Caco-2 (cell line): ENCODE measurements at regions of chr13 and their contacts with region 1.

Region 1: DNA sequence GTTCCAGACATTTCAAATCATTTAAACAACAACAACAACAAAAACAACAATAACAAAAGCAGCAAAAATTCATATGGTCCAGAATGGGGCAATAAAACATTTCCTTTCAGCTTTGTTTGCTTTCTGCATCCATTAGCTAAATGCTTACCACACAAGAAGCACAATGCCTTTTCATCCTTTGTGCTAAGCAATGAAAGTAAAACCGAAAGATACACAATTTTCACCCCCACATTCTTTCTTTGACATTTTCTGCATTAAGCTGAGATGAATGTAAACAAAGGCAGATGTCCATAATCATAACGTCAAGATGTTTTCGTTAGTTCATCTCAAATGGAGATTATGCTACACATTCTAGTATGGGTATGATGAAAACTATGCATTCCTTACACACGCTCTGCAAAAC is 568.5 kb downstream of the SLITRK6 start:
- DNase-seq: peak in 1 of 2 experiments; percentile 13
- H3K4me3 ChIP-seq: no peak overlapping the region
- H3K4me3 Mint-ChIP-seq: no peak overlapping the region
- H3K27ac Mint-ChIP-seq: no peak overlapping the region
- H3K4me1 ChIP-seq: peaks cover 29% of the 10 kb centered on the region
- H3K4me1 Mint-ChIP-seq: peaks cover 7% of the 10 kb centered on the region
- H3K27me3 ChIP-seq: no peaks in the 10 kb centered on the region
- H3K27me3 Mint-ChIP-seq: no peaks in the 10 kb centered on the region
- CTCF ChIP-seq: no peak

Region 2: DNA sequence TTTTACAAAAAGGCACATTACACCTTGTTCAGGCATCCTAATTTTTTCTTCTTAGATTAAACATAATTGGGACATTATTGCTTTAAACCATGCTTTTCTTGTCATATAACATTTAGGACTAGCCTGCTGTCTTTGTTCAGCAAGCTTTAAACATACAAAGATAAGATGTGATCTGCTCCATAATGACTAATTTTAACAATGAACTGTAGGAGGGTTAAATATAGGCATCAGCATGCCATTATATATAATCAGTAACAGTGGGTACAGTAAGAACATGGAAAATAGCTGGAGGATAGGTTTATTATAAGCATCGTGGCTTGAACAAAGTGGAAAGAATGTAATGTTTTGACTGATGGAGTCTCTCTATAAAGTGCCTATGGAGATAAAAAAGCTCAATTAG is 93.2 kb before region 1 on chr13:
- CTCF ChIA-PET with region 1: no interaction called
- POLR2A ChIA-PET with region 1: no interaction called
- intact Hi-C with region 1: no loop called
- DNase-seq: no peak
- H3K4me3 ChIP-seq: no peak overlapping the region
- H3K4me3 Mint-ChIP-seq: no peak overlapping the region
- H3K27ac Mint-ChIP-seq: no peak overlapping the region
- H3K4me1 ChIP-seq: no peaks in the 10 kb centered on the region
- H3K4me1 Mint-ChIP-seq: peaks cover 14% of the 10 kb centered on the region
- H3K27me3 ChIP-seq: no peaks in the 10 kb centered on the region
- H3K27me3 Mint-ChIP-seq: no peaks in the 10 kb centered on the region
- CTCF ChIP-seq: no peak

Region 3: GRCh38 chr13:85283408-85283807 is 52.7 kb after region 1 on chr13:
- CTCF ChIA-PET with region 1: no interaction called
- POLR2A ChIA-PET with region 1: no interaction called
- intact Hi-C with region 1: loop called (anchors 1 kb)
- DNase-seq: peak in 1 of 2 experiments; percentile 42
- H3K4me3 ChIP-seq: no peak overlapping the region
- H3K4me3 Mint-ChIP-seq: peak overlapping the region; percentile 15
- H3K27ac Mint-ChIP-seq: peak overlapping the region; percentile 83
- H3K4me1 ChIP-seq: peaks cover 31% of the 10 kb centered on the region
- H3K4me1 Mint-ChIP-seq: peaks cover 15% of the 10 kb centered on the region
- H3K27me3 ChIP-seq: no peaks in the 10 kb centered on the region
- H3K27me3 Mint-ChIP-seq: no peaks in the 10 kb centered on the region
- CTCF ChIP-seq: no peak

Region 4: DNA sequence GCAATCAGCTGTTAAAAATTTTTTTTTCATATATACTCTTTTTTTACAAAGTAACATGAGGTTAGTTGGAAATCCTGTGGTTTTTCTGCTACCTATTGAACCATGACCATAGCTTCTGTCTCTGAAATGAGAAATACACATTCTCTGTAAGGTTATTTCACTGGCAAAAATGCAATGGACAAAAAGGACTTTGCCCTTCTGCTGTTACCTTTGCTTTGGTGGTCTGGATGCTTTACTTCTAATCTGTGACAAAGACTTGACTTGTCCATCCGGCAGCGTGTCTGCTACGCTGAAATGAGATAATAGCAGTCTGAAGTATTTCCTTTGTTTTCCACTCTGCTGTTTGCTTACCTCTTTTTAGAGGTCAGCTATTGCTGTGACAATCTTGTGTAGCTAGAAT is 155.7 kb after region 1 on chr13:
- CTCF ChIA-PET with region 1: no interaction called
- POLR2A ChIA-PET with region 1: no interaction called
- intact Hi-C with region 1: no loop called
- DNase-seq: no peak
- H3K4me3 ChIP-seq: no peak overlapping the region
- H3K4me3 Mint-ChIP-seq: no peak overlapping the region
- H3K27ac Mint-ChIP-seq: no peak overlapping the region
- H3K4me1 ChIP-seq: peaks cover 10% of the 10 kb centered on the region
- H3K4me1 Mint-ChIP-seq: peaks cover 7% of the 10 kb centered on the region
- H3K27me3 ChIP-seq: no peaks in the 10 kb centered on the region
- H3K27me3 Mint-ChIP-seq: no peaks in the 10 kb centered on the region
- CTCF ChIP-seq: no peak